ENCODE measurements at regions of chr7 and their contacts with region 1.

Region 1: DNA sequence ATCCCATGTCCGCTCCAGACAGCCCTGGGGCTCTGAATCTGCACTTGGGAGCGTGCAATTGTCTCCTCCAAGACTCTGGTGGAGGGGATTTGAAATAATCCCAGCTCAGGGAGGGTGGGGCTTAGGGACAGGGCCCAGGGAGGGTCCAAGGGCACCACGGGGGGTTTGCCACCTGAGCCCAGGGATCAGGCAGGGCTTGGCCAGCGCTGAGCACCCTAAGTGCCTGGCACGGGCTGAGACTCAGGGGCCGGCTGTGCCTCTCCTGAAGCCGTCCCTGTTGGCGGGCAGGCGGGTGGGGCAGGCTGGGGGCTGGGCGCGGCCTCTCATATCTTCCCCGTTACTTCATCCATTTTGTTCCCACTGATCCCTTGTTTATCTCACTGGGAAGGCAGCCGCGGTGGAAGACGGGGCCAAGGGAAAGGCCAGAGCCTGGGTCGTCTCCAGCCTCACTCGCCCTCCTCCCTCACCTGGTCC is 41.8 kb upstream of the ELN start:
- DNase-seq: peak in 1 of 2 donors; percentile 87
- H3K4me3 ChIP-seq: peak overlapping the region in 1 of 2 donors; percentile 31
- H3K27ac ChIP-seq: peak overlapping the region; percentile 70 to 94
- H3K4me1 ChIP-seq: peaks cover 7 to 37% of the 10 kb centered on the region in 2 donors
- H3K27me3 ChIP-seq: no peaks in the 10 kb centered on the region
- CTCF ChIP-seq: no peak

Region 2: GRCh38 chr7:73952266-73952665 is 33.9 kb before region 1 on chr7:
- intact Hi-C with region 1: no loop called
- DNase-seq: no peak
- H3K4me3 ChIP-seq: no peak overlapping the region
- H3K27ac ChIP-seq: no peak overlapping the region
- H3K4me1 ChIP-seq: no peaks in the 10 kb centered on the region
- H3K27me3 ChIP-seq: no peaks in the 10 kb centered on the region
- CTCF ChIP-seq: no peak

Region 3: GRCh38 chr7:73971704-73972341 is 14.4 kb before region 1 on chr7:
- intact Hi-C with region 1: loop called (anchors 2 kb)
- DNase-seq: peak in 1 of 2 donors; percentile 57
- H3K4me3 ChIP-seq: no peak overlapping the region
- H3K27ac ChIP-seq: peak overlapping the region in 1 of 2 donors; percentile 58
- H3K4me1 ChIP-seq: peaks cover 16 to 52% of the 10 kb centered on the region in 2 donors
- H3K27me3 ChIP-seq: no peaks in the 10 kb centered on the region
- CTCF ChIP-seq: peak in 1 of 3 experiments; percentile 15

Region 4: DNA sequence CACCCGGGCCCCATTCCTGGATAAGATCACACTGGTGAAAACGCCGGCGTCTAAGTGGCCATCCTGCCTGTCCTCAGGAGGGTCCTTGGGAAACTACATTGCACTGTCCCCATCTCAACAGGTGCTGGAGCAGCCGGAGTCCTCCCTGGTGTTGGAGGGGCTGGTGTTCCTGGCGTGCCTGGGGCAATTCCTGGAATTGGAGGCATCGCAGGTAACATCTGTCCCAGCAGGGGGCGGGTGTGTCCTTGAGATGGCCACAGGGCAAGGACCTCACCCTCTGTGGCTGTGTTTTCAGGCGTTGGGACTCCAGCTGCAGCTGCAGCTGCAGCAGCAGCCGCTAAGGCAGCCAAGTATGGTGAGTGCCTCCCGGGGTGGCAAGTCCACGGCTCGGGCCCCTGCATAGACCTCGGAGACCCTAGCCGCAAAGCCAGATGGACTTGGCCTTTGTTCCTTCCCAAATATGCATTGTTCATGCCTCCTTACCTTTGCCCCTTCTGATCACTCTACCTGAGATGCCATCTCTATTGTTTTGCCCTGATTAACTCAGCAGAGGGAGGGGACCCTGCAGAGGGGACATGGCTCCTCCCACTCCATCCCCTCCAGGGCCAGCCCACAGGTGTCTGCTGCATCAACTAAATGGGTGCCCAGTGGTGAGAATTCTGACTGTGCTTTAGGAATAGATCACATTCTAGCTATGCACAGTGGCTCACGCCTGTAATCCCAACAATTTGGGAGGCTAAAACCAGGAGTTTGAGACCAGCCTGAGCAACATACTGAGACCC is 65.6 kb after region 1 on chr7:
- intact Hi-C with region 1: no loop called
- DNase-seq: peak in 1 of 2 donors; percentile 7
- H3K4me3 ChIP-seq: no peak overlapping the region
- H3K27ac ChIP-seq: peak overlapping the region; percentile 22 to 53
- H3K4me1 ChIP-seq: peaks cover 0 to 15% of the 10 kb centered on the region in 2 donors
- H3K27me3 ChIP-seq: no peaks in the 10 kb centered on the region
- CTCF ChIP-seq: no peak